Heart right ventricle (tissue), 16 donors: ENCODE measurements at regions of chr6 and their contacts with region 1.

Region 1: DNA sequence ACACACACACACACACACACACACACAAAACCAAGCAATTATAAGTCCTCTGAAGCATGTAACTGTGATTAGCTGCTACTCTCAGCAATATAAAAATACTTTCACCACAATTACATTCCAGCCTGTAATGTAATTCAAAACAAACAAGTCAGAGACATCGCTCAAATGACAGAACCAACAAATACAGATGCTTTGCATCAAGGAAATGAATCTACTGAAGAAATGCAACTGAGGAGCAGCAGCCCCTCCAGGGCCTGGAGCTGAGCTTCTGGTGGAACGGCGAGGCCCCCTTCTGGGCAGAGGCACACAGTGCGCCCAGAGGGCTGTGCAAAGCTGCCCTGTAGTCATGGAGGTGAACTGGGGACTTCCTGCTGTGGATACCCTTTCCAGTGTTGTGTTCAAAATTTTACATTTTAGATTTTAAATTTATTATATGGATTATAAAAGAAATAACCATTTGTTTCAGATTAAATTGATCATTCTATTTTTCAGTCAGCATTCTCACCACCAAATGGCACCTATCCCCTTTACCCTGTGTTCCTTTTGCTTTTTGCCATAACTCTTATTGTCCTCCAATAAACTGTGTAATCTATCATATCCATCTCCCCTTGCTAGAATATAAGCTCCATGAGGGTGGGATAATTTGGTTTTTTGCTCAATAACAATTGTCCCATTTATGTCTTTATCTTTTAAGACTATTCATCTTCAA is 23.2 kb downstream of the ADAT2 start:
- DNase-seq: peak; percentile 53 to 71
- ATAC-seq: peak; percentile 92 to 96 (median 95)
- H3K4me3 ChIP-seq: no peak overlapping the region
- H3K27ac ChIP-seq: no peak overlapping the region
- H3K4me1 ChIP-seq: no peaks in the 10 kb centered on the region
- H3K27me3 ChIP-seq: no peaks in the 10 kb centered on the region
- CTCF ChIP-seq: peak; percentile 77 to 99 (median 93)

Region 2: DNA sequence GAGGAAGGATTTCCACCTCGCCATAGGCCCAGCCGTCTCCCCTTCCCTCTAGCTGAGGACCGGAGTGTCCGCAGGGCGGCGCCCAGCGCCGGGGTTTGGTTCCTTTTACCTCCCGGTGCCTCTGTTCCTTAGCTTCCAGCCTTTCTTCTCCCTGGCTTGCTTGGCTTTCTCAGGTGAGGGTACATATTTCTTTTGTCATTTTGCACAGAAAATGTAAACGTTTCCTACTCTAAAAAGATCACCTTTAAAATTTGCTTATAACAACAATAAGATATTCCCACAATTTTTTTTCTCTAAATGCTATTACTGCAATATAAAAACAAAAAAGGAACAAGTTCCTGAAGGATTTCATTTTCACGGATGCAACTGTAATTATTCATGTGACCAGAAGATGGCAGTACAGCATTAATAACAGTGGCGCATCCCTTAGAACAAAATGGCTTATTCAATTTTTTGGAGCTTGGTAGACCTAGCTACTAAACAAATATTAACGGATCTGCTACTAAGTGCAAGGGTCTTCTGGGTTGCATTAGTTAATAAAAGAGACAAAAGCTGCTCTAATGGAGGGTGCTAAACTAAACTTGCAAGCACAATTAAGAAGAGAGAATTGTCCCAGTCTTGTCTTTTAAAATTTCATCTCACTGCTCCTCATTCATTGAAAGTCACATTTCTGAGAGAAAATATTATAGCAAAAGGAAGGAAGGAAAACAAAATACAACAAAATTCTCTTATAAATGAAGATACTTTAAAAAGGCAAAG is 952.6 kb before region 1 on chr6:
- intact Hi-C with region 1: loop called in 9 of 10 experiments (anchors 5 to 10 kb)
- DNase-seq: no peak
- ATAC-seq: no peak
- H3K4me3 ChIP-seq: no peak overlapping the region
- H3K27ac ChIP-seq: no peak overlapping the region
- H3K4me1 ChIP-seq: no peaks in the 10 kb centered on the region
- H3K27me3 ChIP-seq: no peaks in the 10 kb centered on the region
- CTCF ChIP-seq: peak; percentile 70 to 89 (median 81)

Region 3: GRCh38 chr6:142686507-142686887 is 740.8 kb before region 1 on chr6:
- intact Hi-C with region 1: loop called in 5 of 10 experiments (anchors 5 kb)
- DNase-seq: no peak
- ATAC-seq: no peak
- H3K4me3 ChIP-seq: no peak overlapping the region
- H3K27ac ChIP-seq: no peak overlapping the region
- H3K4me1 ChIP-seq: no peaks in the 10 kb centered on the region
- H3K27me3 ChIP-seq: peaks cover 0 to 5% (median 0%) of the 10 kb centered on the region in 7 donors
- CTCF ChIP-seq: no peak

Region 4: GRCh38 chr6:143026696-143027449 is 400.4 kb before region 1 on chr6:
- intact Hi-C with region 1: loop called in 1 of 10 experiments (anchors 10 kb)
- DNase-seq: peak; percentile 26 to 27
- ATAC-seq: peak in 6 of 8 donors; percentile 55 to 78 (median 60)
- H3K4me3 ChIP-seq: no peak overlapping the region
- H3K27ac ChIP-seq: no peak overlapping the region
- H3K4me1 ChIP-seq: no peaks in the 10 kb centered on the region
- H3K27me3 ChIP-seq: no peaks in the 10 kb centered on the region
- CTCF ChIP-seq: peak; percentile 47 to 78 (median 70)

Region 5: GRCh38 chr6:143223895-143224294 is 203.4 kb before region 1 on chr6:
- intact Hi-C with region 1: loop called in 1 of 10 experiments (anchors 10 kb)
- DNase-seq: peak; percentile 57 to 70
- ATAC-seq: peak; percentile 69 to 89 (median 76)
- H3K4me3 ChIP-seq: no peak overlapping the region
- H3K27ac ChIP-seq: peak overlapping the region; percentile 45 to 87 (median 74)
- H3K4me1 ChIP-seq: peaks cover 13 to 39% (median 34%) of the 10 kb centered on the region in 9 donors
- H3K27me3 ChIP-seq: no peaks in the 10 kb centered on the region
- CTCF ChIP-seq: no peak